K562 (cell line): ENCODE measurements at regions of chr9 and their contacts with region 1.

Region 1: DNA sequence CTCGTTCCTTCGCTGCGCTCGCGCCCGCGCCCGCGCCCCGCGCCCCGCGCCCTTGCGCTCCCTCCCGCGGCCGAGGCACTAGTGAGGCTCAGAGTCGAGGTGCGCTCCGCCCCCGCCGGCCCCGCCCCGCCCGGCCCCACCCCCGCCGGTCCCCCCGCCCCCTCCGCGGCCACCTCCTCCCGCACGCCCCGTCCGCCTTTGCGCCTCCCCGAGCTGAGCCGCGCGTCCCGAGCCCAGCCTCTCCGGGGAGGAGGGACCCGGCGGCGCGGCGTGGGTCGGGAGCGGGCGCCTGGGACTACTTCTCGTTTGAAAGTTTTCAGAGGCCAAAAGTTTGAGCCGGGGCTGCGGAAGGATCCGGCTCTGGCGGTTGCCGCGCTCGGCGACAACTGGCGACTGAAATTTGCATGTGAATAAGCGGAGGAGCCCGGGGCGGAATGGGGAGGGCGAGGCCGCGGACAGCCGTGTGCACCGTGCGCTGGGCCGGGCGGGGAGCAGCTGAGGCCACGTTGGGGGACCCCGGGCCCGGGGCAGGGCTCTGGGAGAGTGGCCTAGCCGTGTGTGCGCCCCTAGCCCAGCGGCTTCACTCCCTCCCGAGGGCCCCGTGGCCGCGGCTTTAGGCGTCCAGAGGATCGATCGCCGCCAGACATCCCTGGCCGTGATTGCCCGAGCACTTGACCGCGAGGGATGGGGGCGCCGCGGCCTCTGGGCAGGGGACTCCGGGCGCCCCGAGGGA is at the start of gene NOTCH1:
- DNase-seq: peak; percentile 87 to 96 (median 94)
- ATAC-seq: peak; percentile 90
- H3K4me3 ChIP-seq: peak within 1 kb of the TSS; percentile 69
- H3K27ac ChIP-seq: peak within 1 kb of the TSS; percentile 70
- H3K4me1 ChIP-seq: peaks cover 15 to 85% of the 10 kb centered on the region in 2 experiments; a peak in 4 of 5 replicates
- H3K27me3 ChIP-seq: no peaks in the 10 kb centered on the region
- CTCF ChIP-seq: no peak
- EP300 ChIP-seq: no peak
- POLR2A ChIP-seq: peak; percentile 44; the same call in 1 of the 2 replicates
- RAD21 ChIP-seq: peak; percentile 0 to 17; a peak in 1 of 4 replicates
- polyA plus RNA-seq, gene NOTCH1: 0.03 to 0.04 TPM

Region 2: DNA sequence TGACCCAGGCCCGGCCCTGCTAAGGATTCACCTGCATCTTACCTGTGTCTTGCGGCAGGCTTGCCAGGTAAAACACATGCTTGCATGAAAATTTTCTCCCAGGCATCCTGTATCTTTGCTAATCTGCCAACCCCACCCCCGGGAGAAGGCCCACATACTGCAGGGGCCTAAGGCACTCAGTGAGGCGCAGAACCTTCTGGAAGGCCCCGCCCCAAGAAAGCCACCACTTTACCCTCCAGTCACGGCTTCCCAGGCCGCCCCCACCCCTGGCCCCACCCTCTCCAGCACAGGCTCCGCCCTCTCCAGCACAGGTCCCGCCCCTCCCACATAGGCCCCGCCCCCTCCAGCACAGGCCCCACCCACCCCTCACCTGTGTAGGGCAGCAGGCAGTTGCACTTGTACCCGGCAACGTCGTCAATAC is 33.5 kb before region 1 on chr9:
- CTCF ChIA-PET with region 1: no interaction called
- POLR2A ChIA-PET with region 1: no interaction called
- in situ Hi-C with region 1: no loop called
- intact Hi-C with region 1: loop called (anchors 2 kb)
- DNase-seq: peak; percentile 76 to 97 (median 96)
- ATAC-seq: peak; percentile 96
- H3K4me3 ChIP-seq: peak overlapping the region; percentile 28
- H3K27ac ChIP-seq: peak overlapping the region; percentile 78
- H3K4me1 ChIP-seq: peaks cover 16 to 67% of the 10 kb centered on the region in 2 experiments
- H3K27me3 ChIP-seq: no peaks in the 10 kb centered on the region
- CTCF ChIP-seq: no peak; a peak in 1 of 6 replicates
- EP300 ChIP-seq: no peak
- POLR2A ChIP-seq: peak; percentile 30; the same call in 1 of the 2 replicates
- RAD21 ChIP-seq: no peak